Right ventricle myocardium superior (tissue), 1 donor: ENCODE measurements at regions of chr6 and their contacts with region 1.

Region 1: DNA sequence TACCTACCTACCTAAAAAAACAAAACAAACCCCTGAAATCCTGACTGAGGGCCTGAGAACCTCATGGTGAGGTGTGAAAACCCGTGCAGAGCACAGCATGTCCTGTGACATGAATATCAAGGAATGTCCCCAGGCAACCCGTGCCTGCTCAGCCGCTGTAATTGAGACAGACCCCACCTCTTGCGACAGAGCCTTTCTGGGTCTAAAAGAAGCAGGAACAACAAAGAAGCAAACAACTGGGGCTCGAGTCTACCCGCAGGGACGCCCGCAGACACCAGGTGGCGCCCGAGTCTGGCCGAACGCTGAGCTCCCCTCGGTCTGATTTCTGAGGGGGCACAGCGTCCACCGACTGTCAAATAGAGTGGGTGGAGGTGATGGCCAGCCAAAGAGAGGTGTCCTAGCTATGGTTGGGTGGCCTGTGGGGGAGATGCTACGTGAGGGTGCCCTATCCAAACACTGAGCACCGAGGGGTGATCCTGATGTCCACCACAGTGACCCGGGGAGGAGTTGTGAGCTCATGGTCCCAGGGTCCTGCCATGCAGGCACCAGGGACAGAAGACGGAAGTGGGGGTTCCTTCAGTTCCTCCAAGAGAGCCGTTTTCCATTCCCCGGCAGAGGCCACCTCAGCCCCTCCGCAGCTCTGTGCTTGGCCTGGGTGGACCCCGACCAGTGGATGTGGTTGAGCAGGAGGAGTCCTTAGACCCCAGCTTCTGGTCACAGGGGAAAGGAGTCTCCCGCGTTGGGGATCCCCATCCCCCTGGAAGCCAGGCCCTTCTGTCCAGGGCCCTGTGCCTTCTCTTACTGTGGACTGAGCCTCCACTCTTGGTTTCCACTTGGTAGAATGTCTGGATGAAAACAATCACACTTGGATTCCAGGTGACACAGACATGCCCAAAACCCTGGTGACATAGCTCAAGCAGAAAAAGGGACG is 268.2 kb downstream of the CDC5L start:
- DNase-seq: peak; percentile 80
- ATAC-seq: peak; percentile 89

Region 2: GRCh38 chr6:43926634-43927524 is 728.8 kb before region 1 on chr6:
- intact Hi-C with region 1: no loop called
- DNase-seq: no peak
- ATAC-seq: peak; percentile 51

Region 3: DNA sequence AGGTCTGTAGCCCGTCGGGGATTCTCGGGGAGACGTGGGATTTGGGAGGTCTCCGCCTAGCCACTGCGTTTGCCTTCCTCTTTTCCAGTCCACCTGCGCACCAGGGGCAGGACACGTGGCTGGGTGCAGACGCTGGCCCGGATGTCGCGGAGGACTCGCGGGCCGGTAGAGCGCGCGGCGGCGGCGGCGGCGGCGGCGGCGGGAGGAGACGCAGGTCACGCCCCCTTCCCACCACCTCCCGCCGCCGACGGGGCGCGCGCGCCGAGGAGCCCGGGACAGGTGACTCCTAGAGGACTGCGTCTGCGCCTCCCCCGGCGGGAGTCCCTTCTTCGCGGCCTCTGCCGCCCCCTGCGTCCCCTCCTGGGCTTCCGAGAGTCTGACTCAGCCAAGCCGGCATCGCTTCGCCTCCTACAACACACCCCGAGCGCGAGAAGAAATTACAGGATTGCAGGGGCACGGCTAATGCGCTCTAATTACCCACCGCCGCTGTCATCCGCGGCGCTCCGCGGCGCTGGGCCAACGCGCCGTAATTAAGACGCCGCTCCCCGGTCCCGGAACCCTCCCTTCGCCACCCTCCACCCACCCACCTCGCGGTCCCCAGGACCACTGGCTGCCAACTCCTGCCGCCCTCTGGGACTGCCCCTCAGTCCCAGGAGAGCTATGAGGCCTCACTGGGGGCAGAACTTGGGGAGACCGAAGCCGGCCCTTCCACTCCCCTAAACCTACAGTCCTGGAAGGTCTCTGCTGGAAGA is 652.9 kb before region 1 on chr6:
- intact Hi-C with region 1: no loop called
- DNase-seq: peak; percentile 63
- ATAC-seq: peak; percentile 42

Region 4: GRCh38 chr6:45419571-45420082 is 764.0 kb after region 1 on chr6:
- intact Hi-C with region 1: loop called (anchors 5 kb)
- DNase-seq: peak; percentile 68
- ATAC-seq: peak; percentile 60

Region 5: DNA sequence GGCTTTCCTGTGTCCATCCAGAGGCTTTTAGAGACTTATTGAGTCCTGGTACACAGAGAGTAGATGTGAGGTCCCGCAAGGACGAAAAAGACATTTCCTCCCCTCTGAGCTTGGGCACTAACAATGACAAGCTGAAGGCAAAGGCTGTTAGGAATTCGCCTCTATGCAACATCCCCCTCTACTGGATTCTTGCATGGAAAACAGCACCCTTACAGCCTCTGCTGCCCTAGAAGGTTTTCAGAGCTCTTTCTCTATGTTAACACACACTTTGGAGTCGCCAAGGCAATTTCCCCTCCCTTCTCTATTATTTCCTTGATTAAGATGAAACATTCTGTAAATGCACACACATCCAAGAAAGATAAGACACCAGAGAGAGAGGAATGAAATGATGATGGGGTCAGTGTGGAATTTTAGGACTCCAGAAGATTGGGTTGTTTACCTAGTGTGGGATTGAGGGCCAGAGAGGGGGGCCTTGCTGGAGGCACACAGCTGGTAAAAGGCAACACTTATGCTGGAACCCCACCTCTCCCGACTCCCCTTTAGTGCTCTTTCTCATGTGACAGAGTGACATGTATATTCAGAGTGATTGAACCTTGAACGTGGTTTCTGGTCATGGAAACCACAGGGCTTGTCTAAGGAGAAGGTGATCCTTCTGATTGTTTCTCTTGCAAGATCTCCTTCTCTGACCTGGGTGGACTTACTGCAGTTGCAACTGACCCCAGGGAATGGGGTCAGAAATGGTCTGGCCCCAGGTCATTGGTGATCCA is 1059.2 kb after region 1 on chr6:
- intact Hi-C with region 1: loop called (anchors 2 kb)
- DNase-seq: no peak
- ATAC-seq: peak; percentile 96

Region 6: DNA sequence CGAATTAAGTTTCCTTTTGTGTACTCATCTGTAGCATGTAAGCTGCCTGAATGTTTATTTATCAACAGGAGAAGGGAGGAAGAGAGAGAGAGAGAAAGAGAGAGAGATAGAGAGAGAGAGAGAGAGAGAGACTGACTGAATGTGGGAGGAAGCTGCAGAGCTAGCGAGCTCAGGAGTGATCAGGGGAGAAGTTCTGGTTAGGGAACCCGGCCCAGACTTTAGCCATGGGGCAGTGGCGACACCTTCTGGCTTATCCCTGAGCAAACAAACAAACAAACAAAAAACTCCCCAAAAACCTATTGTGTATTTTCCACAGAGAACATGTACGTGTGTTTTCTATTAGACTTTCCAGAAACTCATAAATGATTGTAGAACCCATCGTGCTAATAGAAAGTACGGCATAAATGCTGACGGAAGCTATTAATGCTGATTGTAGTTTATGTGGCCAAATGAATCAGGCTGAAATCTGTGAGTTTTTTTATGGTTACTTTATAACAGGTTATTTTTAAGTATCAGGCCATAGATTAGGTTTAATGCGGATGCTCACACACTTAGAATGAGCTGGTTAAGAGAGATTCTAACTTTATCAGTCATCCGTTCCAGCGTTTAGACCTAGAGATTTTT is 1267.2 kb after region 1 on chr6:
- intact Hi-C with region 1: loop called (anchors 10 kb)
- DNase-seq: peak; percentile 76
- ATAC-seq: peak; percentile 84